Right ventricle myocardium inferior (tissue), 1 donor: ENCODE measurements at regions of chr12 and their contacts with region 1.

Region 1: DNA sequence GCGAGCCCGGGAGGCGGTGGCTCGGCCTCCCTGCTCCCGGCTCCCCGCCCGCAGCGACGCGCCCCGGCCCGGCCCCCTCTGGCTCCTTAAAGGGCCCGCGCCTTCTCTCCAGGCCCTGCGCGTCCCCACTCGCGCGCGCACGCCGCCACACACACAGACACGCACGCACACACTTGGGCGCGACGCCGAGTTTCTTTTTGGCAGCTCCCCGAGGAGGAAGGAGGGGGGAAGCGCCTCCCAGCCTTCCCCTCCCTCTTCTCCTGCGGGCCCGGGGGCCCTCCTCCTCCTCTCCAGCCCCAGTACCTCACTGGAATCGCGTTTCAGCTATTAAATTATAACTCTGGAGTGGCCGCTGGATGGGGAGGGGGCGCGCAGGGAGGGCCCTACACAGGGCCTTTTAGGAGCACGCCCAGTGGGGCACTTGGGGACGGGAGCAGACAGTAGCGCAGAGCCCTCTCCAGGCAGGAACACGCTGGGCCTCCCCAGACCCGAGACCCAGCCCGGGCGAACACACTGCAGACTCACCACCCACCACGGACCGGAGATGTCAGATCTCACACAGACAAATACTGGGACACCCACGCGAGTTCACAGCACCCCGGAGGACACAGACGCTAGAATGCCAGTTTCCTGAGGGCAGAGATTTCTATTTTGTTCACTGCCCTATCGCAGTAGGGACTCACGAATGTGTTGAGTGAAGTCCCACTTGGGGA is 405 bp upstream of the NCOR2 start:
- DNase-seq: peak; percentile 99
- ATAC-seq: peak; percentile 89

Region 2: GRCh38 chr12:124379938-124380754 is 187.7 kb before region 1 on chr12:
- intact Hi-C with region 1: loop called (anchors 5 kb)
- DNase-seq: peak; percentile 85
- ATAC-seq: peak; percentile 48

Region 3: DNA sequence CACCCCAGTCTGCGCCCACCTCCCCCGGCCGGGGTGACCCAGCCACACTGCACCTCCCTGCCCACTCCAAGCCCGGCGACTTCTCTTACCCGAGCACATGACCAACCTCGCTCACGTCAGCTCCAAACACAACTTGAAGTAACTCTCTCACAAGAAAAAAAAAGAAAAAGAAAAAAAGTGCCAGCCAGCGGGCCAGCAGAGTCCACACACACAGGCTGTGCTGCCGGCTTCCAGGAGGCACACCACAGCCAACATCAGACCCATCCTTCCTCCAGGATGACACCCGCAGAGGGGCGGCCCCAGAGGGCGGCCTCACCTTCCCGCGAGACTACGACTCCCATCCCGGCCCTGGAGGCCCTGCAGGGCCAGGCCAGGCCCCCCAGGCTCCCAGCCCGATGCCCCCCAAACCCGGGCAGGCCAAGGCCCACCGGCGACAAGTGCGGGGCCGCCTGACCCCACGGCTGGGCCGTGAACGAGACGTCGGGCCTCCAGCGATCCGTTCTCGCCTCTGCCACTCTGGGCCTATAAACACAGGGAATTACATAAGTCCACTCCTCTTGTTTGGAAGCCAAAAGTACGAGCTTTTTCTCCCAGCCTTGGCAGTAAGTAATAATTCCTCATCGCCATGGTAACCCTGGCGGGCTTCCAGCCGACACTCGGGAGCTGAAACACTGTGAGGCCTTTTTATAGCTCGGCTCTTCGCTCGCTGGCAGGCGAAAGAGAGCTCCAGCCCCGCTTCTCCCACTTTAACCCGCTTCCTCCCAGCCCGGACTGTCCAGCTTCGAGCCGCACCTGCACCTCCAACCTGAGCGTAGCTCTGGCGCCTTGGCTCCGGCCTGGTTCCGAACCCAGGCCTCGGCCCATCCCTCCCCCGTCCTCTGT is 49.5 kb before region 1 on chr12:
- intact Hi-C with region 1: loop called (anchors 1 kb)
- DNase-seq: peak; percentile 97
- ATAC-seq: peak; percentile 76

Region 4: DNA sequence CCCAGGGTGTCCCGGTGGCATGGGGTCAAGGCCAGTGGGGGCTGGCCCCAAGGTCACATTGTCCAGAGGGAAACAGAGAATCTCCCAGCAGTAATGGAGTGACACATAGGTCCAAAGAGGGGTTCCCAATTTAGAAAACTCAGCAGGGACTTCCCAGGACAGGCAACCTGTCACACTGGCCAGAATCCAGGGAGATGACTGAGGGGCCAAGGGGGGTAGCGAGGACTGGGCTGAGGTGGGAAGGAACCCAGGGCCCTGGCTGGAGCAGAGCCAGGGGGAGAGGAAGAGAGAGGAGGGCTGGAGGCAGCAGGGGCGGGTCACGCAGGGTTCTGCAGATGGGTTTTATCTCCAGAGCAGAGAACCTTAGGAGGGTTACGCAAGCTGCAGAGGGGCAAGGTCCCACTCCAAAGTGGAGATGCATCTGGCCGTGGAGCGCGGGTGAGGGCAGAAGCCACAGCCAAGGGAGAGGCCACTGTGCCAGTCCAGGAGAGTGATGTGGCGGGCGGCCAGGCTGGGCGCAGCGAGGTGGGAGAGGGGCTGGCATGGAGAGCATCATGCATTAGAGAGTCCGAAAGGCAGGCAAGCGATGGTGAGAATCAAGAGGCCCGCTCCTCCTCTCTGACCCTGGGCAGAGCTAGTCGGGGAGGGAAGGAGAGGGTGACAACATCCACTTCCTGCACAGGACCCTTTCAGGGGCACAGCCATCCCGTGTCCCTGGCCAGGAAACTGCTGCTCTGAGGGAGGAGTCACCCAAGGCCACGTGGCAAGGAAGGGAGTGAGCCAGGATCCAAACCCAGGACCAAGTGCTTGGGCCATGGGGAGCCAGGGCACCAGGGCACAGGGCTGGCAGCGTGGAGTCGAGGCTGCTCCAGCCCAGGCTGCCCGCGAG is 29.4 kb before region 1 on chr12:
- intact Hi-C with region 1: no loop called
- DNase-seq: no peak
- ATAC-seq: peak; percentile 62

Region 5: DNA sequence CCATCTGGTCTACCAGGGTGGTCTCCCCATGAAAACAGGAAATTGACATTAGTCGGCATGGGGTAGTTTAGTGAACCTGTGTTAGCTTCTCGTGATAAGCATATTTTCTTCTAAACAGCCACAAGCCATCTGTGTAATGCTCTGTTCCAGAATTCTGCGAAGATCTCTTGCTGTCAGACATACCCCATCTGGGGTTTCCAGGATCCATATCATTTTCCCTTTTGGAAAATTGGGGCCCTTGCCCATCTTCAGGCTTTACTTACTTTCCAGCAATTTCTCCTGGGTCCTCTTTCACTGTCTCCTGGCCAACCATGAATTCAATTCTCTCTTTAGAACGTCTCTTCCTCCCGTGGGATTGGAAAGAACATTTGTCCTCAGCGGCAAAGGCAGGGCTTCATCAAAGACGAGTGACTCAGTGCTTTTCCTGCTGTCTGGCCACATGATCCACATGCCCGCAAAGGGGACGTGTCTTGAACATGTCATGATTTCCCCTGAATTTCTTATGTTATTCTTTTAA is 21.0 kb after region 1 on chr12:
- intact Hi-C with region 1: no loop called
- DNase-seq: peak; percentile 70
- ATAC-seq: peak; percentile 83

Region 6: GRCh38 chr12:124655698-124656516 is 88.1 kb after region 1 on chr12:
- intact Hi-C with region 1: loop called (anchors 2 kb)
- DNase-seq: peak; percentile 92
- ATAC-seq: peak; percentile 80

Region 7: GRCh38 chr12:124745891-124746570 is 178.2 kb after region 1 on chr12:
- intact Hi-C with region 1: loop called (anchors 5 kb)
- DNase-seq: peak; percentile 96
- ATAC-seq: peak; percentile 96